ENCODE measurements at regions of chr3 and their contacts with region 1.

Region 1: DNA sequence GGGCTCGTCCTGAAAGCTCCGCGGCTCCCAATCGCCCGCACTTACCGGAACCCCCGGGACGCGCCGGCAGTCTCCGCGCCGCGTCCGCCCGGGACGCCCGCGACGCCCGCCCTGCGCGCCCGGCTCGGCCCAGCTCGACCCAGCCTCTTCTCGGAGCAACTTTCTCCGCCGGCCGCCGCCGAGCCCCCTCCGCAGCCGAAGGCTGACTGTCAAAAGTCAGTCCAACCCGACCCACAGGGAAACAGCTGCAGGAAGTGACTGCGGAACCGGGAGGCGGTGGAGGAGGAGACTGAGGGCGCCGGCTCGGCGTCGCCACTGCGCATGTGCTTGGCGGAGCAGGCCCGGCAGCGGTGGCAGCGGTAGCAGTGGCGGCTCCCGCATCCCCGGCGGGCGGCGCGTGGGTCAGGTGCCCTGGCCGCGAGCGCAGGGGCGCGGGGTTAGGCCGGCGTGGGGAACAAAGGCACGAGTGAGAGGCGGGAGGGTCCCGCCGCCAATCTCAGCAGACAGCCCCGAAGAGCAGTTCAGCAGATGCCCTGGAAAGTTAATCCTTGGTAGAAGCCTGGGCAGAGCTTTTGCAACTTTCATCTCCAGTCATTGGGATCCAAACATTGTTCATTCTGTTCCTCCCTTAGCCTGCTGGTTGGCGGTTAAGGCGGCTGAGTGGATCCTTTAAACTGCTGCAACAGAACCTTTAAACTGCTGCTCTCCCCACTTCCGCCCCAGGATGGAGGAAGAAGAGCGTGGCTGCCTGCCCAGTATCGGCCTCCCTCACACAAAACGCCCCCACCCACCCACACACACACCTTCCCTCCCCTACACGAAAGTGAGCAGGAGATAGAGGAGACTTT is at the start of gene ZMAT3:
- DNase-seq: peak; percentile 79
- H3K4me3 Mint-ChIP-seq: peak within 1 kb of the TSS; percentile 93
- H3K27ac Mint-ChIP-seq: peak within 1 kb of the TSS; percentile 90
- H3K4me1 Mint-ChIP-seq: peaks cover 20% of the 10 kb centered on the region
- H3K27me3 Mint-ChIP-seq: no peaks in the 10 kb centered on the region
- CTCF ChIP-seq: no peak
- total RNA-seq, gene ZMAT3: 50.9 and 58.0 TPM in 2 replicates

Region 2: DNA sequence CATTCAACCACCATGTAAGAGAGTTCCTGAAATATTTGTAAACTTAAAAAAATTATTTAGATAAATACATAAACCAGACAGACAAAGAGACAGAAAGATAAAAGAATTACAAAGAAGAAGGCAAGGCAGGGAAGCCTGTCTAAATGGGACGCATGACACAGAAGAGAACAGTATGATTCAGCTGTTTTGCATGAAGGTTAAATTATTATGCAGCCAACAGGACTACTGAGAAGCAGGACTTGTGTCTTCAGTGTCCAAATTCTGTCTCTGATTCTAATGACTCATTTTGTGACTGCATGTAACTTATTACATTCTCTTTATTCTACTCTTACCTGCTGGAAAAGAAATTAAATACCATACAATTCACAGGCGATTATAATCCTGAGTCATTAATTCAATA is 876.0 kb before region 1 on chr3:
- CTCF ChIA-PET with region 1: no interaction called
- POLR2A ChIA-PET with region 1: no interaction called
- intact Hi-C with region 1: no loop called
- DNase-seq: peak; percentile 50
- H3K4me3 Mint-ChIP-seq: no peak overlapping the region
- H3K27ac Mint-ChIP-seq: peak overlapping the region; percentile 5
- H3K4me1 Mint-ChIP-seq: peaks cover 26% of the 10 kb centered on the region
- H3K27me3 Mint-ChIP-seq: no peaks in the 10 kb centered on the region
- CTCF ChIP-seq: no peak

Region 3: GRCh38 chr3:178223876-178224275 is 847.9 kb before region 1 on chr3:
- CTCF ChIA-PET with region 1: no interaction called
- POLR2A ChIA-PET with region 1: no interaction called
- intact Hi-C with region 1: no loop called
- DNase-seq: no peak
- H3K4me3 Mint-ChIP-seq: no peak overlapping the region
- H3K27ac Mint-ChIP-seq: no peak overlapping the region
- H3K4me1 Mint-ChIP-seq: no peaks in the 10 kb centered on the region
- H3K27me3 Mint-ChIP-seq: no peaks in the 10 kb centered on the region
- CTCF ChIP-seq: no peak

Region 4: GRCh38 chr3:179027326-179027900 is 44.4 kb before region 1 on chr3:
- CTCF ChIA-PET with region 1: interaction called, 15 read pairs
- POLR2A ChIA-PET with region 1: interaction called, 59 read pairs
- intact Hi-C with region 1: no loop called
- DNase-seq: peak; percentile 71
- H3K4me3 Mint-ChIP-seq: peak overlapping the region; percentile 48
- H3K27ac Mint-ChIP-seq: peak overlapping the region; percentile 89
- H3K4me1 Mint-ChIP-seq: peaks cover 16% of the 10 kb centered on the region
- H3K27me3 Mint-ChIP-seq: no peaks in the 10 kb centered on the region
- CTCF ChIP-seq: no peak

Region 5: DNA sequence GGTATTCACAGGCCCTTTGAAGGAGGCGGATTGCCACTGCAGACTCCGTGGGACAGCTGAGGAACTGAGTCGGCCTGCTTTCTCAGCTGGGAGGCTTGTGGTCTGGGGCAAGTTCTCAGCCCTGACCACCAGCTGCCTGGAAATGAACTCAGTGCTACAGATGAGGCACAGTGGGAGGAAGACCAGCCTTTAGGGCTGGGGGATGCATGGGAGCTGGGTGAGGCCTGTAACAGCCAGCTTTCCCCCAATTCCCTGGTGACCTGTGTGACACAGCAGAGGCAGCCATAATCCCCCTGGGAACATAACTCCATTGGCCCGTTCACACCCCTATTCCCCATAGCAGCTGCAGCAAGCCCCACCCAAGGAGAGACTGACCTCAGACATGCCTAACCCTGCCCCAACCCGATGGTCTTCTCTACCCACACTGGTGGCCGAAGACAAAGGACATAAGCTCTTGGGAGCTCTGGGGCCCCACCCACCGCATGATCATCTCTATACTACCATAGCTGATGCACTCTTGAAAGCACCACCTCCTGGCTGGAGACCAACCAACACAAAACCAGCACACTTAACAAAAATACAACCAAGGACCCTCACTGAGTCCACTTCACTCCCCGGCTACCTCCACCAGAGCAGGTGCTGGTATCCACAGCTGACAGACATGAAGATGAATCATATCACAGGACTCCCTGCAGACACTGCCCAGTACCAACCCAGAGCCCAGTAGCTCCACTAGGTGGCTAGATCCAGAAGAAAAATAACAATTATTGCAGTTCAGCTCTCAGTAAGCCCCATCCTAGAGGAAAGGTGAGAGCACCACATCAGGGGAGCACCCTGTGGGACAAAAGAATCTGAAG is 25.0 kb before region 1 on chr3:
- CTCF ChIA-PET with region 1: interaction called, 4 read pairs
- POLR2A ChIA-PET with region 1: interaction called, 22 read pairs
- intact Hi-C with region 1: no loop called
- DNase-seq: no peak
- H3K4me3 Mint-ChIP-seq: no peak overlapping the region
- H3K27ac Mint-ChIP-seq: no peak overlapping the region
- H3K4me1 Mint-ChIP-seq: peaks cover 27% of the 10 kb centered on the region
- H3K27me3 Mint-ChIP-seq: no peaks in the 10 kb centered on the region
- CTCF ChIP-seq: no peak

Region 6: DNA sequence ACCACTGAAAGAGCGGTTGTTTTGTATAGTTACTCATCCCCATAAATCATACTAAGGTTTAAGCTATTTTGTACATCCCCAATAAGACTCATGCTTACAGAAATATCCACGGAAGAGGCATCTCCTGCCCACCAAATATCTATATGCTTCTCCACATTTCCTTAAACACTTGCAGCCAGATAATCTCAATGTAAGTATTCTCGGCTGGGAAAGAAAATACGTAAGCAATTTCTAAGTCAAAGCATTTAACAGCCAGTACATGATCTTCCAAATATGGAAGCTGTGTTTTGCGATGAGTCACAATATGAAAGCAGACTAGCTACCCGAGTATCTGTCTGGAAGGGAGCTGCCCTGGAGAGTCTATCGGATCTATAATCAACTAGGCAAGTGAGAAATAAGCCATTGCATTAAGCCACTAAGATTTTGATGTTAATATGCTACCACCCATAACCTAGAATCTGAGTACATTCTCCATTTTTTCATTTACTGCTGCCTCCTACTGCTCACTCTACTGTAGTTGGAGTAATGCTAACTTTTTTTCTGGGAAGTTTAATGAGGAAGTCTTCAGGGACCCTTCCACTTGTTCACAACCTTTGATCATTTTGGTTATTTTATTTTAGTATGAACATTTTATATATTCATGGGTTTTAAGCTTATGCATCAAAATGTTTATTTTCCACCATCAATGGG is 26.8 kb after region 1 on chr3:
- CTCF ChIA-PET with region 1: interaction called, 34 read pairs
- POLR2A ChIA-PET with region 1: interaction called, 120 read pairs
- intact Hi-C with region 1: no loop called
- DNase-seq: peak; percentile 74
- H3K4me3 Mint-ChIP-seq: peak overlapping the region; percentile 48
- H3K27ac Mint-ChIP-seq: peak overlapping the region; percentile 35
- H3K4me1 Mint-ChIP-seq: peaks cover 7% of the 10 kb centered on the region
- H3K27me3 Mint-ChIP-seq: no peaks in the 10 kb centered on the region
- CTCF ChIP-seq: peak; percentile 22

Region 7: DNA sequence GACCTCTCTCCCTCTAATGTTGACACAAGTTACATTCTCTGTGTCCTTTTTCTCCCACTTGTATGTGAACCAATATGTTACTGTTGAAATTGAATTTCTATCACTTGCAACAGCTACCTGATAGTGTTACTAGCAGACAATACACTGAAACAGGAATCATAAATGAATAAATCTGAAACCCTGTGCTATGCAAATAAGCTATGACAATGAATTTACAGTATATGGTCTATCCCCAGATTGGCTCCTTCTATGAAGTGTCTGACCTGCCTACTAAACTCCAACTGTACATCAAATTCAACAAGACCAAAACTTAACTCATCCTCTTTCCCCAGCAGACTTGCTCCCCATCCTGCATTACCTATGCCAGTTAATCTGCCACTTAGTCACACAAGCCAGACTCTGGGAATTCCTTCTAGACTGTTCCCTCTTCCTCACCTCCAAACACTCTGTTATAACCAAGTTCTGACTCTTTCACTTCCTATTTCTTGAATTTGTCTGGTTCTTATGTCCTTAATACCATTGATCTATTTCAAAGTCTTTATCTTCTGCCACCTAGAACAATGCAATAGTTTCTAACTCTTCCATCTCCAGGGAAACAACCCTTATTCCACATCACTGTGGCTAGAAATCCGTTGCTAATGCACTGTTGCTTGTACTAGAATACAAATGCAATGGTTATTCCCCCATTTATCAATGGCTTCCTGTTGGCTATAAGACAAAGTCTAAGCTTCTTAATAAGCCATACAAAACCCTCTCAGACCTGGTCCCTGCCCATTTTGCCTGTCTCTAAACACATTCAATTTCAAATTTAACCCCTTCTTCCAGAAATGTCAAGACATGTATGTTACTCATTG is 237.7 kb after region 1 on chr3:
- CTCF ChIA-PET with region 1: interaction called, 16 read pairs
- POLR2A ChIA-PET with region 1: no interaction called
- intact Hi-C with region 1: no loop called
- DNase-seq: no peak
- H3K4me3 Mint-ChIP-seq: no peak overlapping the region
- H3K27ac Mint-ChIP-seq: no peak overlapping the region
- H3K4me1 Mint-ChIP-seq: no peaks in the 10 kb centered on the region
- H3K27me3 Mint-ChIP-seq: no peaks in the 10 kb centered on the region
- CTCF ChIP-seq: no peak